Activated CD8-positive, alpha-beta T cell treated with anti-CD3 and anti-CD28 coated beads, Interleukin-2, amount 10 ng/mL, durations not matched to agents 7 days and 5 days (primary cell): ENCODE measurements at regions of chr2 and their contacts with region 1.

Region 1: GRCh38 chr2:70086838-70087701 is at the start of gene PCBP1:
- DNase-seq: peak; percentile 96
- ATAC-seq: peak; percentile 45
- H3K4me3 Mint-ChIP-seq: peak within 1 kb of the TSS; percentile 97
- H3K27ac Mint-ChIP-seq: peak within 1 kb of the TSS; percentile 100
- H3K4me1 Mint-ChIP-seq: peaks cover 57% of the 10 kb centered on the region
- H3K27me3 Mint-ChIP-seq: no peaks in the 10 kb centered on the region
- total RNA-seq, gene PCBP1: 516 to 518 TPM

Region 2: GRCh38 chr2:69975500-69976462 is 111.3 kb before region 1 on chr2:
- CTCF ChIA-PET with region 1: no interaction called
- POLR2A ChIA-PET with region 1: no interaction called
- DNase-seq: no peak
- ATAC-seq: no peak
- H3K4me3 Mint-ChIP-seq: no peak overlapping the region
- H3K27ac Mint-ChIP-seq: no peak overlapping the region
- H3K4me1 Mint-ChIP-seq: peaks cover 14% of the 10 kb centered on the region
- H3K27me3 Mint-ChIP-seq: no peaks in the 10 kb centered on the region

Region 3: GRCh38 chr2:69986326-69987090 is 100.6 kb before region 1 on chr2:
- CTCF ChIA-PET with region 1: no interaction called
- POLR2A ChIA-PET with region 1: no interaction called
- DNase-seq: no peak
- ATAC-seq: no peak
- H3K4me3 Mint-ChIP-seq: no peak overlapping the region
- H3K27ac Mint-ChIP-seq: no peak overlapping the region
- H3K4me1 Mint-ChIP-seq: no peaks in the 10 kb centered on the region
- H3K27me3 Mint-ChIP-seq: no peaks in the 10 kb centered on the region

Region 4: GRCh38 chr2:70070541-70071268 is 16.4 kb before region 1 on chr2:
- CTCF ChIA-PET with region 1: interaction called, 98 read pairs
- POLR2A ChIA-PET with region 1: interaction called, 21 read pairs
- DNase-seq: peak; percentile 81
- ATAC-seq: peak; percentile 80
- H3K4me3 Mint-ChIP-seq: peak overlapping the region; percentile 57
- H3K27ac Mint-ChIP-seq: peak overlapping the region; percentile 87
- H3K4me1 Mint-ChIP-seq: peaks cover 47% of the 10 kb centered on the region
- H3K27me3 Mint-ChIP-seq: no peaks in the 10 kb centered on the region

Region 5: GRCh38 chr2:70104231-70105111 is 17.4 kb after region 1 on chr2:
- CTCF ChIA-PET with region 1: interaction called, 15 read pairs
- POLR2A ChIA-PET with region 1: interaction called, 63 read pairs
- DNase-seq: peak; percentile 64
- ATAC-seq: no peak
- H3K4me3 Mint-ChIP-seq: peak overlapping the region; percentile 77
- H3K27ac Mint-ChIP-seq: peak overlapping the region; percentile 95
- H3K4me1 Mint-ChIP-seq: peaks cover 62% of the 10 kb centered on the region
- H3K27me3 Mint-ChIP-seq: no peaks in the 10 kb centered on the region

Region 6: GRCh38 chr2:70124983-70125480 is 38.0 kb after region 1 on chr2:
- CTCF ChIA-PET with region 1: interaction called, 6 read pairs
- POLR2A ChIA-PET with region 1: interaction called, 84 read pairs
- DNase-seq: peak; percentile 69
- ATAC-seq: peak; percentile 70
- H3K4me3 Mint-ChIP-seq: peak overlapping the region; percentile 90
- H3K27ac Mint-ChIP-seq: peak overlapping the region; percentile 99
- H3K4me1 Mint-ChIP-seq: peaks cover 78% of the 10 kb centered on the region
- H3K27me3 Mint-ChIP-seq: no peaks in the 10 kb centered on the region

Region 7: DNA sequence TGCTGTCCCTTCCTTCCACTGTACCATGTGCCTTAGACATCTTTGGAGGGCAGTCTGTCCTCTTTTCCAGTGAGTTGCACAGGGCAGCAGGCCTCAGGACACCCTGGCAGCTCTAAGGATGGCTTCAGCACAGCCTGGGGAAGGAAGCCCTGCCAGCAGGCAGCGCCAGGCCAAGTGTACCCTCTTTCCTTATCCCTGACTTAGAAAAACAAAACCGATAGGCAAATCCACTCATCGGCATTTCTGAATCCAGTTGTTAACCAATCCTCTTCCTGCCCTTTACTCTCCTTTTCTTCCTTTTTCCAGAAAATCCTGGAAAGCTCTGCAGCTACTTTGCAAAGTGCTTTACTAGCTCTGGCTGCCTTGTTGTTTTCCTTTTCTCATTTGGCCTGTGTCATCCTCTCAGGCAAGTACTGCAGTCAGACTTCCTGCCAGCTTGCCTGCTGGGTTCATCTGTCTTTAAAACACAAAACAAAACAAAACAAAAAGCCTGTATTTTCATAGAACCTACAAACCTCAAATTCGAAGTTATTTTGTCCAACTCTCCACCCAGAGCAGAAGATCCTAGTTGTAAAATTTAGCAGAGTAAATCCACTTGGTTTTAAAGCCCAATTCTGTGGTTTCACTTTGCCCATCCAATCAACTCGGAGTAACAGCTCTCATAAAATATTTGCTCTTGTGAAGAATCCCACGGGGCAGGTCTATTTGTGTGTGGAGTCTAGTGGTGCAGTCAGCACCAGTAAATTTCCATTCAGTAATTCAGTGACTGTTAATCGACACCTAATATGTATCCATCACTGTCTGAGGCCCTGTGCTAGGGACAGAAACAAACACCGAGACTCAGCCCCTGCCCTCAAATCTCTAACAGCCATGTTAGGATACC is 45.4 kb after region 1 on chr2:
- CTCF ChIA-PET with region 1: interaction called, 19 read pairs
- POLR2A ChIA-PET with region 1: interaction called, 370 read pairs
- DNase-seq: peak; percentile 65
- ATAC-seq: peak; percentile 43
- H3K4me3 Mint-ChIP-seq: peak overlapping the region; percentile 84
- H3K27ac Mint-ChIP-seq: peak overlapping the region; percentile 98
- H3K4me1 Mint-ChIP-seq: peaks cover 79% of the 10 kb centered on the region
- H3K27me3 Mint-ChIP-seq: no peaks in the 10 kb centered on the region

Region 8: GRCh38 chr2:70137519-70137918 is 50.4 kb after region 1 on chr2:
- CTCF ChIA-PET with region 1: interaction called, 41 read pairs
- POLR2A ChIA-PET with region 1: interaction called, 370 read pairs
- DNase-seq: peak; percentile 63
- ATAC-seq: peak; percentile 7
- H3K4me3 Mint-ChIP-seq: peak overlapping the region; percentile 32
- H3K27ac Mint-ChIP-seq: peak overlapping the region; percentile 98
- H3K4me1 Mint-ChIP-seq: peaks cover 84% of the 10 kb centered on the region
- H3K27me3 Mint-ChIP-seq: no peaks in the 10 kb centered on the region